Colonic mucosa (tissue), 4 donors: ENCODE measurements at regions of chr12 and their contacts with region 1.

Region 1: DNA sequence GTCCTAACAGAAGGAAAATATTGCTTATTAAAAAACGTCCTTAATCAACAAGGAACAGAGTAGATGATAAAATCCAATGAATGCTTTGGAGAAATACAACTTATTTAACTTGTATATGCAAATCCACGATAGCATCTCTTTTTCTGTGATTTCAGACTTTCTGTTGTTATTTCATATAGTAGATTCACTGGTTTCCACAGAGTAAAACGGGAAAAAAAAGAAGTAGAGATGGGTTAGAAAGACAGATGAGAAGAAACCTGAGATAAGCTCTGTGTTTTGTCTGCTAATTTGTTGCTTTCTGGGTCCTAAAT is 447.7 kb downstream of the RERGL start:
- DNase-seq: no peak
- H3K4me3 ChIP-seq: no peak overlapping the region
- H3K27ac ChIP-seq: no peak overlapping the region
- H3K4me1 ChIP-seq: no peaks in the 10 kb centered on the region
- H3K27me3 ChIP-seq: no peaks in the 10 kb centered on the region
- CTCF ChIP-seq: no peak

Region 2: GRCh38 chr12:16385782-16386646 is 1256.3 kb before region 1 on chr12:
- intact Hi-C with region 1: loop called (anchors 10 kb)
- DNase-seq: peak; percentile 36
- H3K4me3 ChIP-seq: no peak overlapping the region
- H3K27ac ChIP-seq: no peak overlapping the region
- H3K4me1 ChIP-seq: no peaks in the 10 kb centered on the region
- H3K27me3 ChIP-seq: no peaks in the 10 kb centered on the region
- CTCF ChIP-seq: no peak

Region 3: DNA sequence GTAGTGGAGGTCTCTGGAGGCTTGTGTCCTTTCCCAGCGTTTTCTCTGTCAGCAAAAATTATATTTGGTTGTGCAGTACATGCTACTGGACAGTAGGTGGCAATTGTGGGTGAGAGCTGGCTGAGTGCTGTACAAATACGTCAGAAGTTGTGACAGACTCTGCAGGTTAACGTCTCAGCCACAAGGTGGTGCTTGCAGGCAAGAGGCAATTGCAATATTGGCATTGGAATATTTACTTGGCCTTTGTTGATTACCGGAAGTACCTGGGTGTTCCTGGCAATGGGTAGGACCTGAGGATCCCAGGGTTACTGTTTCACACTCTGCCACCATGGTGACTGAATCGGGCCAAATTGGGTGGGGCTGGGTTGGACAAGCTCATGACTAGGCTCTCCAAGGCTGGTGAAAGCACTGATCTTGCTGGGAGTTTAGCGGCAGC is 702.4 kb before region 1 on chr12:
- intact Hi-C with region 1: loop called (anchors 5 kb)
- DNase-seq: peak; percentile 62
- H3K4me3 ChIP-seq: no peak overlapping the region
- H3K27ac ChIP-seq: no peak overlapping the region
- H3K4me1 ChIP-seq: no peaks in the 10 kb centered on the region
- H3K27me3 ChIP-seq: no peaks in the 10 kb centered on the region
- CTCF ChIP-seq: peak; percentile 63

Region 4: GRCh38 chr12:17579205-17580026 is 62.9 kb before region 1 on chr12:
- intact Hi-C with region 1: no loop called
- DNase-seq: no peak
- H3K4me3 ChIP-seq: no peak overlapping the region
- H3K27ac ChIP-seq: no peak overlapping the region
- H3K4me1 ChIP-seq: no peaks in the 10 kb centered on the region
- H3K27me3 ChIP-seq: no peaks in the 10 kb centered on the region
- CTCF ChIP-seq: no peak